Ascending aorta (tissue), 2 donors: ENCODE measurements at regions of chr1 and their contacts with region 1.

Region 1: DNA sequence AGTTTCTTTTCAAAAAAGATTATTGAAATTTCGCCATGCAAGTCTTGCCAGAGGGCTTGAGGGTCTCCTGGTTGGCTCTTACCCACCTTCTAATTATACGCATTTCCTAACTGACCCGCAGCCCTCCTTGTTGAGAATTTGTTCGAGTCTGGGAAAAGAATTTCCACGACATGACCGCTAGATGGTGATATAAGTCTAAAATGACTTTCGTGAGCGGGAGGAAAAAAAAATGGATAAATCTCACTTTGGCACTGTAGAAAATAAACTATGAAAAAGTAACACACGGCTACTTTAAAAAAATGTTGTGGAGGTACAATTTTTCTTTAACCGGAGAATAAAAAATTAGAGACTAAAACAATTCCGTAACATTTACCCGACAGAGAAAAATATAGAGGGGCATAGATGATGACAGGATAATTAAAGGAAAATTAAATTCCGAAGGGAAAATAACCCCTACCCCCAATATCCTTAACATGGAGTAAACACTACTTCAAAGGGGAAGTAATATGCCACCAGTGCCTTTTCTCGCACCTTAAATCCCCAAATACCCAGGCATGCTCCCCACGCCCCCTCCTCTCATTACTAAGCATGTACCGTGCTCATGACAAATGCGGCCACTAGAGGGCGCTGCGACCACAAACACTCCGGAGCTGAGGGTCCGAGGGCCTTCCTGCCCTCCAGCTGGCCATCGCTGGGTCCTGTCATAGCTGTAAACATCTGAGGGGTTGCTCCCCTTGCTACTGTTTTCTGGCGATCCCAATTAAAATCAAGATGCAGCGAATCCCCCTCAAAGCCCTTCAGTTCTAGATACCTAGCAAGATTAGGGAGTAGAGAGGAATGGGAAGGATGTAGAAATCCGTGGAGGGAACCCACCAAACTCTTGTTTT is 266.9 kb downstream of the ASTN1 start:
- DNase-seq: no peak
- H3K4me3 ChIP-seq: peak overlapping the region; percentile 31 to 35
- H3K27ac ChIP-seq: no peak overlapping the region
- H3K4me1 ChIP-seq: no peaks in the 10 kb centered on the region
- H3K27me3 ChIP-seq: no peaks in the 10 kb centered on the region
- CTCF ChIP-seq: peak; percentile 47 to 66 (median 64)

Region 2: GRCh38 chr1:176843352-176844297 is 54.0 kb before region 1 on chr1:
- intact Hi-C with region 1: no loop called
- DNase-seq: peak in 1 of 2 donors; percentile 63
- H3K4me3 ChIP-seq: no peak overlapping the region
- H3K27ac ChIP-seq: no peak overlapping the region
- H3K4me1 ChIP-seq: no peaks in the 10 kb centered on the region
- H3K27me3 ChIP-seq: no peaks in the 10 kb centered on the region
- CTCF ChIP-seq: peak; percentile 52 to 66 (median 54)

Region 3: GRCh38 chr1:177181631-177182291 is 284.2 kb after region 1 on chr1:
- intact Hi-C with region 1: loop called (anchors 1 kb)
- DNase-seq: peak in 1 of 2 donors; percentile 66
- H3K4me3 ChIP-seq: peak overlapping the region; percentile 17 to 22
- H3K27ac ChIP-seq: no peak overlapping the region
- H3K4me1 ChIP-seq: no peaks in the 10 kb centered on the region
- H3K27me3 ChIP-seq: no peaks in the 10 kb centered on the region
- CTCF ChIP-seq: peak; percentile 38 to 79 (median 69)

Region 4: GRCh38 chr1:177780096-177780700 is 882.6 kb after region 1 on chr1:
- intact Hi-C with region 1: loop called (anchors 5 kb)
- DNase-seq: no peak
- H3K4me3 ChIP-seq: no peak overlapping the region
- H3K27ac ChIP-seq: no peak overlapping the region
- H3K4me1 ChIP-seq: no peaks in the 10 kb centered on the region
- H3K27me3 ChIP-seq: no peaks in the 10 kb centered on the region
- CTCF ChIP-seq: peak in 1 of 3 experiments; percentile 27

Region 5: DNA sequence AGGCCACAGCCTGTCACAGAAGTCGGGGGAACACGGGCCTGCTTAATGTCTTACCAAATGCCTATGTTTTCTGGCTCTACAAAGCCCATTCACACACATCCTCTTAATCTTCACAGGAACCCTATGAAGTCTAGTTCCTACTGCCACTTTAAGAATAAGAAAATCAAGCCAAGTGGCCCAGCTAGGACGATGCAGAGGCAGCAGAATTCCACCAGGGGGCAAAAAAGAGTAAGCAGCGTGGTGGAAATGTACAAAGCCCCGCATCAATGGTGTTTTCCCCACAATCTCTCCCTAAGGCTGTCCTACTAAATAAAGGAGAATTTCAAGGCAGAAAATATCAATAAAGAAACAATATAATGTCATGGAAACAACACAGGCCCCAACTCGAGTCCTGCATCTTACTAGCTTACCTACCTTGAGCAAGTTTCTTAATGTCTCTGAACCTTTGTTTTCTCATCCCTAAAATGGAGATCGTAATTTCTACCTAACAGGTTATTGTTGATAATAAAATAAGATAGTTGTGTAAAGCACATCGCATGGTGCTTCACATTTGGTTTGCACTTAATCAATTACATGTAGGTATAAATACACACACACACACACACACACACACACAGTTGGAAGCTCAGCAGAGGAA is 1050.9 kb after region 1 on chr1:
- intact Hi-C with region 1: loop called (anchors 5 kb)
- DNase-seq: peak in 1 of 2 donors; percentile 70
- H3K4me3 ChIP-seq: no peak overlapping the region
- H3K27ac ChIP-seq: no peak overlapping the region
- H3K4me1 ChIP-seq: no peaks in the 10 kb centered on the region
- H3K27me3 ChIP-seq: no peaks in the 10 kb centered on the region
- CTCF ChIP-seq: peak; percentile 64 to 86 (median 76)